Activated CD4-positive, alpha-beta memory T cell treated with anti-CD3 and anti-CD28 coated beads, Interleukin-2, amount 10 ng/mL, durations not matched to agents 7 days and 5 days (primary cell): ENCODE measurements at regions of chr19 and their contacts with region 1.

Region 1: DNA sequence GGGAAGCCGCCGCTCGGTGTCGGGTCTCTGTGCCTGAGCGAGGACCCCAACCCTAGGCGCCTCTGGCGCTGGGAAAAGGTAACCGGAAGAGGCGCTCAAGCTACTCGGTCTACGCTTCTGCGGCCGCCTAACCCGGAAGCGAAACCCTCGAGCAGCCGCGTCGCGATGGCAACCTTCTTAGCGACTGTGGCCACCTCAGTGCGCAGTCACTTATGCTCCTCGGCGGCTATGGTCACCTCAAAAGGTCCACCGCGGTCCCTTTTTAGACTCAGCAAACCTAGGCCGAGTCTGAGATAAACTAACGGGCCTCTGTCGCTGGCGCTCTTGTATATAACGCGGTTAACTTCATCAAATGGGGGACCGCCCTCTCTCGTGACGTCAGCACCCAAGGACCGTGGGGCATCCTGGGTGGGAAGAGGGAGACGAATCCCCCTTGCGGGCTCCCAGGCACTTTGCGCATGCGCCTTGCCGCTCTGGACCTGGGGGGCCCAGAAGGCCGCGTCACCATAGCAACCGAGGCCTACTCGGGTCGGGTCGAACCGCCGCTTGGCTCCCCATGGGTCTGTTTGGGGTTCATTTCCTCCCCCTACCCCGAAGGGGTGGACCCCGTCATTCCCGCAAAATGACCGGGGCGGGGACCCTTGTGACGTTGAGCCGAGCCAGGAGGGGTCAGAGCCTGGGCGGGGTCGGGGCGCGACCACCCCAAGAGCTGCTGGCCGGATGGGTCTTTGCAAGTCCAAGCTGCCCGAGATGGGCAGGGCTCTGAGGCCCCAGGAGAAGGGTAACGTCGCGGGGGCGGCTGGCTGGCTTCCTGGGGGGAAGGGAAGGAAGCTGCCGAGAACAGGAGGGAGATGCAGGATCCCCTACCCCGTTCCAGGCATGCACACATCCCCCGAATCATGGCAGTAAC is at the start of gene GTF2F1:
- DNase-seq: peak; percentile 91
- H3K4me3 Mint-ChIP-seq: peak within 1 kb of the TSS; percentile 94
- H3K27ac Mint-ChIP-seq: peak within 1 kb of the TSS; percentile 93
- H3K4me1 Mint-ChIP-seq: peaks cover 26% of the 10 kb centered on the region
- H3K27me3 Mint-ChIP-seq: no peaks in the 10 kb centered on the region
- total RNA-seq, gene GTF2F1: 75.5 to 79.8 TPM

Region 2: DNA sequence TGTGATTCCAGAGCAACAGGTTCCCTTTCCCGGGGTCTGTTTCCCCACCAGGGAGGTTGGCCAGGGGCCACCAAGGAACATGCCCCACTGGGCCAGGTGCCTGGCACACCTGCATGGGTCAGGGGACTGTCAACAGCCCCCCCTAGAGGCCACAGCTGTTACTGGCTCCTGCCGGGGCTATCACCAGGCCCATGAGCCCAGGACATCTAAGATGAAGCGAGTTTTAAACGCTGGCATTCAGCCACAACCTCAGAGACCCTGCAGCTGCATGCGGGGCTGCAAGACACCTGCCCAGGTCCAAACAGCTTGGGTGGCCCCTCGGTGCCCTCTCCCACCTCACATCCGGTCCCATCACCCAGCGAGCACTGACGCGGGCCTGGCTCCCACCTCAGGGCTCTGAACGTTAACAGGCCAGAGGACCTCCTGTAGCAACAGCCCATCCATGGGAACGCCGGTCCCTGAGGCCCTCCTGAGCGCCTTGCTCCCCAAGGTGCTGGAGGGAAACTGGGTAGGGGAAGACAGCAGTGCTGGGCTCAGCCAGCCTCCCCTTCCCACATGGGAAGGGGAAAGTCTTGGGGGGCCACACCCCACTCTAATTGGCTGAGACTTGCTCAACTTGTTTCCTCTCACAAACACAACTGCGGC is 19.2 kb after region 1 on chr19:
- CTCF ChIA-PET with region 1: no interaction called
- POLR2A ChIA-PET with region 1: no interaction called
- DNase-seq: peak; percentile 43
- H3K4me3 Mint-ChIP-seq: no peak overlapping the region
- H3K27ac Mint-ChIP-seq: no peak overlapping the region
- H3K4me1 Mint-ChIP-seq: no peaks in the 10 kb centered on the region
- H3K27me3 Mint-ChIP-seq: no peaks in the 10 kb centered on the region

Region 3: DNA sequence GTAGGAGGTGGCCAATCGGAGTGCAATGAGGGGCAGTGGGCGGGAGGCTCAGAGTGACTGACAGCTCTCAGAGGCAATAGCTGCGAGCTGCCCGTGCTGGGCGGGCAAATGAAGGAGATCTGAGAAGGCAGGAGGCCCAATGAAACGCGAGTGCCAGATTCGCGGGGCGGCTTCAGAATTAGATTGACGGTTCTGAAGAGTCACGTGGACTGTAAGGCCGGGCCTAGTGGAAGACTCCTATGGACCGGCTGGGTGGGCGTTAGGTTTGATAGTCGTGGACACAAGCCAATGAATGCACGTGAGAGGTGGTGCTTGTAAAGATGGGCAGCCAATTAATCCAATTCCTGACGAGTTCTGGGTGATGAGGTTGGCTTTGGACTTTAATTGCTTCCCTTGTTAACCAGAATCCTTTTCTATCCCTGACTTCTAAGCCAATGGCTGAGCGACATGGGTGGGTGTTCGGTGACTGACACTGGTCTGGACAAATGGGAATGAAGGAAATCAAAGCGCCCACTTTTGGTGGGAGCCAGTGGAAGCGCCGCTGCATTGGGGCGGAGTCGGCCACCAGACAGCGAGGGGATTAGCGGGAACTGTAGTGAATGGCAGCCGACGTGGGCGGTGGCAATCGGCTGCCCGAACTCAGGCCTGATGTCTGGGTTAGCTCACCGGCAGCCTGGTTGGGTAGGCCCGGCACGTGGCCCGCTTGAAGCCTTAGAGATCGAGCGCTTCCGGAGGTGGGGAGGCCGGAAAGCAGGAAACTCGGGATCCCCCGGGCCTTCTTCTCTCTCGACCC is 31.8 kb after region 1 on chr19:
- CTCF ChIA-PET with region 1: no interaction called
- POLR2A ChIA-PET with region 1: interaction called, 11 read pairs
- DNase-seq: peak; percentile 100
- H3K4me3 Mint-ChIP-seq: peak overlapping the region; percentile 71
- H3K27ac Mint-ChIP-seq: peak overlapping the region; percentile 80
- H3K4me1 Mint-ChIP-seq: peaks cover 40% of the 10 kb centered on the region
- H3K27me3 Mint-ChIP-seq: no peaks in the 10 kb centered on the region